ENCODE measurements at regions of chr16 and their contacts with region 1.

Region 1: GRCh38 chr16:70251629-70252354 is at the start of gene EXOSC6:
- DNase-seq: peak; percentile 82 to 94
- H3K4me3 ChIP-seq: peak within 1 kb of the TSS; percentile 66 to 87 (median 81)
- H3K27ac ChIP-seq: peak within 1 kb of the TSS; percentile 93
- H3K4me1 ChIP-seq: no peaks in the 10 kb centered on the region; a peak in 1 of 7 replicates
- H3K27me3 ChIP-seq: no peaks in the 10 kb centered on the region
- CTCF ChIP-seq: peak; percentile 90 to 95 (median 90)
- EP300 ChIP-seq: peak in 1 of 2 experiments; percentile 84; a peak in 1 of 3 replicates
- POLR2A ChIP-seq: peak; percentile 86 to 88
- RAD21 ChIP-seq: no peak
- total RNA-seq, gene EXOSC6: 21.7 and 22.5 TPM in 2 replicates

Region 2: DNA sequence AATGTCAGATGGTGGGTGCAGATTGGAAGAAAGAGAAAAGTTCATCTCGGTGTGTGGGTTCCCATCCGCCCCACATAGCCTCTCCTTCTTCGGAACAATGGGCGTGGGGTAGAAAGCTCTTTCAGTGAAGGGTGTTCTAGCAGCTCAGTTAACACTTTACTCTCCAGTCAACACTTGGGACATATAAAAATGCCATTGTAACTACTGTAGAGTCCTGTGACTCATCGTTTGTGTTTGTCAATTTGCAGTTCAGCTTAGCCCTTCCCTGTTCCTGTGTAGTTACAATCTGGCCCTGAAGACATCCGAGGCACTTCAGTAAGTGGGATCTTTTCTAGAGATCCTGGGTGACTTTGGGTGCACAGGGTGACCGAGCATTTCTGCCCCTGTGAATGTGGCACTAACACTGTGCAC is 89.7 kb before region 1 on chr16:
- CTCF ChIA-PET with region 1: interaction called, 14 read pairs
- POLR2A ChIA-PET with region 1: interaction called, 19 read pairs
- DNase-seq: no peak
- H3K4me3 ChIP-seq: no peak overlapping the region
- H3K27ac ChIP-seq: no peak overlapping the region
- H3K4me1 ChIP-seq: no peaks in the 10 kb centered on the region
- H3K27me3 ChIP-seq: no peaks in the 10 kb centered on the region
- CTCF ChIP-seq: no peak
- EP300 ChIP-seq: no peak
- POLR2A ChIP-seq: no peak
- RAD21 ChIP-seq: no peak

Region 3: DNA sequence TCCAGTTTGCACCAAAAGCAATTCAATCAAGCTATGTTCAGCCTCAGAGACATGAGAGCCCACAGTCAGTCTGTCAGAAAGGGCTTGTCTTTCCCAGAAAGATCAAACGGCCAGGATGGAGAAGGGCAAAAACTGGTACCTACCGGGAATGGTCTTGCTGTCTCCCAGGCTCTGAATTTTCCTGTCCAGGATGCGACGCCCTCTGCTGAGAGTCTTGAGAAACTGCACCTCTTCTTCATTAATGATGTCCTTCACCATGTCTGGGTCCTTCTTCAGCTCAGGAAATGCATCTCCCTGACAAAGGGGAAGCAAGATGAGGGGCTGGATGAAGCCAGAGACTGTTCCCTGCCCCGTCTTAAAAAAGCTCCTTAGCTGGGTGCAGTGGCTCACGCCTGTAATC is 15.7 kb after region 1 on chr16:
- CTCF ChIA-PET with region 1: interaction called, 67 read pairs
- POLR2A ChIA-PET with region 1: interaction called, 414 read pairs
- DNase-seq: peak in 1 of 2 experiments; percentile 69
- H3K4me3 ChIP-seq: no peak overlapping the region
- H3K27ac ChIP-seq: no peak overlapping the region
- H3K4me1 ChIP-seq: no peaks in the 10 kb centered on the region
- H3K27me3 ChIP-seq: no peaks in the 10 kb centered on the region
- CTCF ChIP-seq: peak; percentile 51 to 80 (median 58)
- EP300 ChIP-seq: no peak
- POLR2A ChIP-seq: no peak
- RAD21 ChIP-seq: peak; percentile 31 to 34

Region 4: GRCh38 chr16:70289229-70290098 is 37.7 kb after region 1 on chr16 and contains the start of gene AARS1:
- CTCF ChIA-PET with region 1: interaction called, 23 read pairs
- POLR2A ChIA-PET with region 1: interaction called, 414 read pairs
- DNase-seq: peak; percentile 96 to 98
- H3K4me3 ChIP-seq: peak within 1 kb of the TSS; percentile 84 to 96 (median 92)
- H3K27ac ChIP-seq: peak within 1 kb of the TSS; percentile 97
- H3K4me1 ChIP-seq: peaks cover 0 to 3% (median 0%) of the 10 kb centered on the region in 4 experiments; a peak in 3 of 7 replicates
- H3K27me3 ChIP-seq: no peaks in the 10 kb centered on the region
- CTCF ChIP-seq: no peak
- EP300 ChIP-seq: peak in 1 of 2 experiments; percentile 43; a peak in 1 of 3 replicates
- POLR2A ChIP-seq: peak; percentile 97
- RAD21 ChIP-seq: no peak
- total RNA-seq, gene AARS1: 231 and 235 TPM in 2 replicates

Region 5: DNA sequence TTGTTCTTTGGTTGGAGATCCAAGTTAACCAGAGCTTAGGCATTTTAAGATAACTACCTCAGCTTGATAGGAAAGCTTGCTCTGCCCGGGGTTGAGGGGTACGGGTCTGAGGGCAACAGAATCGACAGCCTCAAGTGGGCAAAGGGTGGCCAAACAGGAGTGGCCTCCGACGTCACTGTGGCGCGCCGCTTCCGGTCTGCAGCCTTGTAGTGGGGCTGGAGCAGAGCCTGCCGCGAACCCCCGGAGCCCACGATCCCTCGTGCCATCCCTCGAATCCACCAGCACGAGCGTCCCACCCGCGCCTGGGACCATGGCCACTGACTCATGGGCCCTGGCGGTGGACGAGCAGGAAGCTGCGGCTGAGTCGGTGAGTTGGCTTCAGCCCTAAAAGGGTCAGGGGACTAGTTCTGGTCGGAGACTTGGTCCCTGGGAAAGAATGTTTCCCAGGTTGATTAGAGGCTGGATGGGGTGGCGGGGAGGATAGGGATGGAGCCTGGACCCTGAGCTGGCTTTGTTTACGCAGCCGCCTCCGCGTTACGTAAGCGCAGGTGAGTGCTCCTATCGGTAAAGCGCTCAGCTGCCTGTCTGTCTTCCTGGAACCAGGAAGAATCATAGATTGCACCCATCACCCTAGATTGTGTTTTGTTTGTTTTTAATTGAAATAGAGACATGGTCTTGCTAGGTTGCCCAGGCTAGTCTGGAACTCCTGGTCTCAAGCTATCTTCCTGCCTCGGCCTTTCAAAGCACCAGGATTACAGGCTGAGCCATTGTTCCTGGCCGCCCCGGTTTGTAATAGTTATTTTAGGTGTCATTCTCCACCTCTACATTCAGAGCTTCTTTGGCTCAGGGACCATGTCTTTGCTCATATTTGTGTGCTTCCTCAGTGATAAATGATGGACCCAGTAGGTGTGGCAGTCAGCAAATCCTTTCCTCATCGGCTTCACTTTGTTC is 47.5 kb after region 1 on chr16 and contains the start of gene DDX19B:
- CTCF ChIA-PET with region 1: interaction called, 13 read pairs
- POLR2A ChIA-PET with region 1: interaction called, 8 read pairs
- DNase-seq: peak in 1 of 2 experiments; percentile 84
- H3K4me3 ChIP-seq: peak within 1 kb of the TSS; percentile 89 to 98 (median 98)
- H3K27ac ChIP-seq: peak within 1 kb of the TSS; percentile 93
- H3K4me1 ChIP-seq: peaks cover 0 to 3% (median 1%) of the 10 kb centered on the region in 4 experiments; a peak in 3 of 7 replicates
- H3K27me3 ChIP-seq: no peaks in the 10 kb centered on the region
- CTCF ChIP-seq: peak in 1 of 3 experiments; percentile 0; a peak in 1 of 4 replicates
- EP300 ChIP-seq: no peak
- POLR2A ChIP-seq: peak in 1 of 2 experiments; percentile 94; a peak in 2 of 3 replicates
- RAD21 ChIP-seq: no peak
- total RNA-seq, gene DDX19B: 42.7 and 46.6 TPM in 2 replicates